ENCODE measurements at regions of chr17 and their contacts with region 1.

Region 1: DNA sequence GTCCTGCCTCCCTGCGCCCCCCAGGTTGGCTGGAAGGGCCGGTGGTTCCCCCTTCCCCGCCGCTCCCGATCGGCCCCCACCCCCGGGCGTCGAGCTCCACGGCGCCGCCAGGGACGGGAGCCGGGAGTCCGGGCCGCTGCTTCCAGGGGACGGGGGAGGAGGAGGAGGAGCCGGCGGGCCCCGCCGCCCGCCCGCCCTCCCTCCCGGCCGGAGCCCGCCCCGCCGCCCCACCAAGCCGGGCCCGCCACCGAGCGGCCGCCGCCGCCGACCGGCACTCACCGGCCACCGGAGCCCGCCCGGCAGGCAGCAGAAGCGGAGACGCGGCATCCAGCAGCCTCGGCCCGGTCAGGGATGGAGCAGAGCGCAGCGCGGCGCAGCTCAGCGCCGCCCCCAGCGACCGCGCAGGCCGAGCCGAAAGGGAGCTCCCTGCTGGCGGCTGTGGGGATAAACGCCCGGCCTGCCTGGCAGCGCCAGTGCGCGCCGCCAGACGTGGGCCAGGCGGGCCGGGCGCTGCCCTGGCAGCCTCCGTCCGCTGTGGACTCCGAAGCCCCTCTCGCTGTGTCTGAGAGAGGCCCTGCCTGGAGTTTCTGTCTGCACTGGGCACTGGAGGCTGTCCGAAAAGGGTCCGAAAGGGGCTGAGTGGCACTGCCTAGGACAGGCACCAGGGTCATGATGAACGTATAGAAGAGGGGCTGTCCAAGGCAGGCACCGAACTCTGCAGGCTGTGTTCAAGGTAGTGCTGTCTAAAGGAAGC is at the start of gene MYO18A:
- DNase-seq: peak; percentile 54 to 79
- H3K4me3 ChIP-seq: peak within 1 kb of the TSS; percentile 71
- H3K27ac ChIP-seq: peak within 1 kb of the TSS; percentile 97
- H3K4me1 ChIP-seq: peaks cover 47% of the 10 kb centered on the region
- H3K27me3 ChIP-seq: no peaks in the 10 kb centered on the region
- CTCF ChIP-seq: peak; percentile 78
- total RNA-seq, gene MYO18A: 150 and 158 TPM in 2 replicates

Region 2: GRCh38 chr17:28849281-28849680 is 330.9 kb before region 1 on chr17:
- CTCF ChIA-PET with region 1: no interaction called
- POLR2A ChIA-PET with region 1: no interaction called
- intact Hi-C with region 1: no loop called
- DNase-seq: no peak
- H3K4me3 ChIP-seq: no peak overlapping the region
- H3K27ac ChIP-seq: no peak overlapping the region
- H3K4me1 ChIP-seq: no peaks in the 10 kb centered on the region; the same call in 1 of the 2 replicates
- H3K27me3 ChIP-seq: no peaks in the 10 kb centered on the region
- CTCF ChIP-seq: no peak

Region 3: GRCh38 chr17:29116804-29117772 is 63.1 kb before region 1 on chr17:
- CTCF ChIA-PET with region 1: interaction called, 10 read pairs
- POLR2A ChIA-PET with region 1: no interaction called
- intact Hi-C with region 1: no loop called
- DNase-seq: peak; percentile 47 to 62
- H3K4me3 ChIP-seq: no peak overlapping the region
- H3K27ac ChIP-seq: no peak overlapping the region
- H3K4me1 ChIP-seq: no peaks in the 10 kb centered on the region
- H3K27me3 ChIP-seq: no peaks in the 10 kb centered on the region
- CTCF ChIP-seq: peak; percentile 97

Region 4: GRCh38 chr17:29133146-29133713 is 47.0 kb before region 1 on chr17:
- CTCF ChIA-PET with region 1: interaction called, 4 read pairs
- POLR2A ChIA-PET with region 1: interaction called, 10 read pairs
- intact Hi-C with region 1: no loop called
- DNase-seq: peak; percentile 83 to 89
- H3K4me3 ChIP-seq: peak overlapping the region; percentile 19; the same call in 1 of the 2 replicates
- H3K27ac ChIP-seq: peak overlapping the region; percentile 68
- H3K4me1 ChIP-seq: peaks cover 47% of the 10 kb centered on the region
- H3K27me3 ChIP-seq: no peaks in the 10 kb centered on the region
- CTCF ChIP-seq: no peak

Region 5: GRCh38 chr17:29148790-29149430 is 31.3 kb before region 1 on chr17:
- CTCF ChIA-PET with region 1: interaction called, 32 read pairs
- POLR2A ChIA-PET with region 1: interaction called, 10 read pairs
- intact Hi-C with region 1: loop called (anchors 1 kb)
- DNase-seq: peak; percentile 72 to 94
- H3K4me3 ChIP-seq: peak overlapping the region; percentile 41; the same call in 1 of the 2 replicates
- H3K27ac ChIP-seq: peak overlapping the region; percentile 91
- H3K4me1 ChIP-seq: peaks cover 70% of the 10 kb centered on the region
- H3K27me3 ChIP-seq: no peaks in the 10 kb centered on the region
- CTCF ChIP-seq: peak; percentile 90

Region 6: GRCh38 chr17:29155227-29155965 is 24.8 kb before region 1 on chr17:
- CTCF ChIA-PET with region 1: interaction called, 15 read pairs
- POLR2A ChIA-PET with region 1: interaction called, 14 read pairs
- intact Hi-C with region 1: loop called (anchors 1 kb)
- DNase-seq: peak; percentile 88 to 90
- H3K4me3 ChIP-seq: no peak overlapping the region
- H3K27ac ChIP-seq: peak overlapping the region; percentile 91
- H3K4me1 ChIP-seq: peaks cover 100% of the 10 kb centered on the region
- H3K27me3 ChIP-seq: no peaks in the 10 kb centered on the region
- CTCF ChIP-seq: no peak

Region 7: GRCh38 chr17:29219378-29220047 is 39.3 kb after region 1 on chr17:
- CTCF ChIA-PET with region 1: interaction called, 5 read pairs
- POLR2A ChIA-PET with region 1: interaction called, 4 read pairs
- intact Hi-C with region 1: loop called (anchors 2 kb)
- DNase-seq: peak; percentile 70 to 80
- H3K4me3 ChIP-seq: no peak overlapping the region
- H3K27ac ChIP-seq: no peak overlapping the region
- H3K4me1 ChIP-seq: peaks cover 13% of the 10 kb centered on the region
- H3K27me3 ChIP-seq: no peaks in the 10 kb centered on the region
- CTCF ChIP-seq: peak; percentile 95

Region 8: DNA sequence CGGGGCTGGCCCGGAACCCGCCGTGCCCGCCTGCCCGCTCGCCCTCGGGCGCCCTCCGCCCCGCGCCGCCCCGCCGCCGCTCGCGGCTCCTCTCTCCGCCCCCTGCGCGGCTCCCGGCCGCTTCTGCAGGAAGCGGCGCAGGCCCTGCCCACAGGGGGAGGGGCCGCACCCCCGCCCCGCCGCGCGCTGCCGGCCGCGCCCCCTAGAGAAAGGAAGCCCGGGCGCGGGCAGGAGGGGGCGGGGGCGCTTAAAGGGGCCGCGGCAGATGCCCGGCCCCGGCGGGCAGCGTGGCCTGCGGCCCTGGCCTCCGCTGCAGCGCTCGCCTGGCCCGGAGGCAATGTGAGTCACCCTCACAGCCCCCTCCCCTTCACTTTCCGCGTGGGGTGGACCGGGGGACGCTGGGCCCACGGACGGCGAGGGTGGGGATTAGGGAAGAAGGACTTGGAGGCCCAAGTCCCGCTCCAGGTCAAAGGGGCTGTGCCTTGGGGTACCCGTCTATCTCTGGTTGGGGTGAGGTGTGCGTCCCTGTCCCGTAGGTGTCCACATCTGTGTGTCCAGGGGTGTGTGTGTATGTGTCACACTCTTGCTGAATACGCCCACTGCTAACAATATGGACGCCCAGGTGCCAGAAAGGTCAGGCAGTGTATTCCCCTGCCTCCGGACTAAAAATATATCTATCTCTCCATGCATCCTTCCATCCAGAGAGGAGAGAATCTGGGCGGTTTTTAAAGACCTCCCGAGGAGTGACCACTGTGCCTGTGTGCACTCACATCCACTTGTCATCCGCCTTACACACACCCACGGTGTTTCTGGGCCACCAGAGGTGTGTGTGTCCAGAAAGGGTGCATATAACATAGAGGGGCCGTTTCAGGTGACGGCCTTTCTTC is 409.6 kb after region 1 on chr17 and contains the start of gene GIT1:
- CTCF ChIA-PET with region 1: no interaction called
- POLR2A ChIA-PET with region 1: interaction called, 18 read pairs
- intact Hi-C with region 1: no loop called
- DNase-seq: peak; percentile 58 to 86
- H3K4me3 ChIP-seq: peak within 1 kb of the TSS; percentile 93
- H3K27ac ChIP-seq: 0 out of 2 replicates have a peak within 1 kb of the TSS, but pooled peaks have one; percentile 4
- H3K4me1 ChIP-seq: peaks cover 39% of the 10 kb centered on the region
- H3K27me3 ChIP-seq: no peaks in the 10 kb centered on the region
- CTCF ChIP-seq: no peak; the same call in 1 of the 2 replicates
- total RNA-seq, gene GIT1: 84.8 and 100 TPM in 2 replicates